ENCODE measurements at regions of chr16 and their contacts with region 1.

Region 1: DNA sequence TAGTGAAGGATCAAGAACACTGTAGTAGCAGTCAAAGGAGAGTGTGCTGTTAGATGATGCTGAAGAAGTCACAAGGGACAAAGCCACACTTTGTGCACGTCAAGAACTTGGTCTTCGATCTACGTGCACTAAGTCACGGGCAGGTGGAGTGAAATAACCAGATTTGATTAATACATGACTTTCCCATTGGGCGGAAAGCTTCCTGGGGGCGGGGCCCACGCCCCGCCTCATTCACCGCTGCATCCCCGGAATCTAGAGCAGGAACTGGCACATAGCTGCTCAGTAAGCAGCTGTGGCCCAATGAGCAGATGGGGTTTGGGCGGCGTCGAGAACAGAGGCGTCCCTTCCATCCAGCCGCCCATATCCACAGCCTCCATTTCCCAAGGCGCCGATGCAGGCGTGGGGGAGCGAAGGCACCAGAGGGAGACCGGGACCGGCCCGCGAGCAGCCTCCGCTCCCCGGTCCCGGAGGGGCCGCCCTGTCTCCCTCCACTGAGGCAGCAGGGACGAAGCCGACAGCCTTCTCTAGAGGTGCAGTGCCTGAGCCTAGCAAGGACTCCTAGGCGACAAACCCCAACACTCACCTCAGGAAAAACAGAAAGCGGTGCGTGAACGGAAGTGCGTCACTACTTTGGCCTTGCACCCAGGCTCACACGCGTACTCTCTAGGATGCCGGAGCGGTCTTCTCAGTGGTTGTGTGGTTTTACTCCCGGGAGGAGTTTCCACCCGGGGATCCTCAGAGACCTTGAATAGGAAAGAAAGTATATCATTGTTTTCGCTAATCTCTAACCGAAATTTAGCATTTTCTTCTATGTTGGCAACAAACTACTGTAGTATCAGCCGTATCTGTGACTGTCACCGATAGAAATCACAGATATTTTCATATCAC is 4.9 kb downstream of the ZNF19 start:
- DNase-seq: peak in 1 of 2 experiments; percentile 78
- H3K4me3 ChIP-seq: peak overlapping the region; percentile 53 to 82 (median 80)
- H3K27ac ChIP-seq: peak overlapping the region; percentile 97
- H3K4me1 ChIP-seq: no peaks in the 10 kb centered on the region
- H3K27me3 ChIP-seq: no peaks in the 10 kb centered on the region
- CTCF ChIP-seq: no peak
- EP300 ChIP-seq: no peak
- POLR2A ChIP-seq: peak; percentile 77 to 97
- RAD21 ChIP-seq: no peak; a peak in 1 of 4 replicates

Region 2: GRCh38 chr16:71402007-71402406 is 82.2 kb before region 1 on chr16:
- CTCF ChIA-PET with region 1: no interaction called
- POLR2A ChIA-PET with region 1: no interaction called
- DNase-seq: no peak
- H3K4me3 ChIP-seq: no peak overlapping the region
- H3K27ac ChIP-seq: no peak overlapping the region
- H3K4me1 ChIP-seq: peaks cover 0 to 15% (median 6%) of the 10 kb centered on the region in 4 experiments; a peak in 6 of 7 replicates
- H3K27me3 ChIP-seq: no peaks in the 10 kb centered on the region
- CTCF ChIP-seq: no peak
- EP300 ChIP-seq: no peak
- POLR2A ChIP-seq: no peak
- RAD21 ChIP-seq: no peak

Region 3: DNA sequence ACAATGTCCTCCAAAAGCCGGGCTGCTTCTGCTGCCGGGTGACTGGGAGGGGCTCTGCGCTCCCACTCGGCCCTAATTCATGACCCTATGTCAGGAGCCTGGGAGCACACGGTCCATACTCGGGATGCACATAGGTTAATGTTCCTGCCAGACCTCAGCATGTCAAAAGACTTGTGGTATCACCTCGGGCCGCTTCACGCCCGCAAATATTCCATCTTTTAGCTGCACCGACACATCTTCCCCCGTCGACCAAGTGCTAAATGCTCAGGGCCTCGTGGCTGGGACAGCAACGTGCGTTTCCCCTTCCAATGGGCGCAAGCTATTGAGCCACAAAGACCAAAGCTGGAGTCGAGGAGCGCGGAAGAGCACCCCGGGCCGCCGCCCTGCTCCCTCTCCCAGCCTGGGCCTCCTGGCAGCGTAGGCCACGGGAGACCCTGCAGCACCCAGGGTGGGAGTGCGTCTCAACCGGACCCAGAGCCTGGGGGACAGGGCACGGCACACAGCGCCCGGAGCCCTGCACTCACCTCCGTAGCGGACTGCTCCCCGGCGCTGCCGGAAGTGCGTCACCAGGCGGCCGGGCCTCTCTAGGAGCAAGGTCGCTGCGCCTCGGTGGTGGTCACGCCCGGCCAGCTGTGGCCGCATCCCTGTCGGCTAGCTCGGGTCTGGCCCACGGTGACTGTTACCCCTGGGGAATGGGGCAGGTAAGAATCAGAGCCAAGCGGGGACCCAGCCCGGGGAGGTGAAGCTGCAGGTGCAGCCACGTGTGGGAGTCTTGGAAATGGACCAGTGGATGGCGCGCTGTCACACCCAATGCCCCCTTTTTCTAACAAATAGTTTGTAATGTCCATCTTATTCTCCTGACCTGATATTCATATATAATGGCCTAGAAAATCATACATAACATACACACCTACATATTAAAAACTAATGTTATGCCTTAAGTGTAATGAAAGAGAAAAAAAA is 22.3 kb before region 1 on chr16 and contains the start of gene ZNF23:
- CTCF ChIA-PET with region 1: interaction called, 9 read pairs
- POLR2A ChIA-PET with region 1: interaction called, 54 read pairs
- DNase-seq: peak in 1 of 2 experiments; percentile 92
- H3K4me3 ChIP-seq: peak within 1 kb of the TSS; percentile 82 to 100 (median 98)
- H3K27ac ChIP-seq: peak within 1 kb of the TSS; percentile 90
- H3K4me1 ChIP-seq: peaks cover 0 to 2% (median 0%) of the 10 kb centered on the region in 4 experiments; a peak in 1 of 7 replicates
- H3K27me3 ChIP-seq: no peaks in the 10 kb centered on the region
- CTCF ChIP-seq: peak in 2 of 3 experiments; percentile 6 to 8; a peak in 1 of 4 replicates
- EP300 ChIP-seq: no peak
- POLR2A ChIP-seq: peak; percentile 93 to 96
- RAD21 ChIP-seq: peak in 1 of 2 experiments; percentile 7; a peak in 1 of 4 replicates
- total RNA-seq, gene ZNF23: 10.2 and 12.7 TPM in 2 replicates